Ovary (tissue), 10 donors: ENCODE measurements at regions of chr19 and their contacts with region 1.

Region 1: GRCh38 chr19:35269421-35270117 is 807 bp downstream of the USF2 start:
- DNase-seq: peak; percentile 90 to 95 (median 92)
- H3K4me3 ChIP-seq: peak overlapping the region; percentile 73
- H3K27ac ChIP-seq: peak overlapping the region; percentile 42 to 84
- H3K4me1 ChIP-seq: peaks cover 11% of the 10 kb centered on the region
- H3K27me3 ChIP-seq: no peaks in the 10 kb centered on the region
- CTCF ChIP-seq: peak; percentile 44 to 83 (median 79)
- EP300 ChIP-seq: no peak
- POLR2A ChIP-seq: no peak

Region 2: DNA sequence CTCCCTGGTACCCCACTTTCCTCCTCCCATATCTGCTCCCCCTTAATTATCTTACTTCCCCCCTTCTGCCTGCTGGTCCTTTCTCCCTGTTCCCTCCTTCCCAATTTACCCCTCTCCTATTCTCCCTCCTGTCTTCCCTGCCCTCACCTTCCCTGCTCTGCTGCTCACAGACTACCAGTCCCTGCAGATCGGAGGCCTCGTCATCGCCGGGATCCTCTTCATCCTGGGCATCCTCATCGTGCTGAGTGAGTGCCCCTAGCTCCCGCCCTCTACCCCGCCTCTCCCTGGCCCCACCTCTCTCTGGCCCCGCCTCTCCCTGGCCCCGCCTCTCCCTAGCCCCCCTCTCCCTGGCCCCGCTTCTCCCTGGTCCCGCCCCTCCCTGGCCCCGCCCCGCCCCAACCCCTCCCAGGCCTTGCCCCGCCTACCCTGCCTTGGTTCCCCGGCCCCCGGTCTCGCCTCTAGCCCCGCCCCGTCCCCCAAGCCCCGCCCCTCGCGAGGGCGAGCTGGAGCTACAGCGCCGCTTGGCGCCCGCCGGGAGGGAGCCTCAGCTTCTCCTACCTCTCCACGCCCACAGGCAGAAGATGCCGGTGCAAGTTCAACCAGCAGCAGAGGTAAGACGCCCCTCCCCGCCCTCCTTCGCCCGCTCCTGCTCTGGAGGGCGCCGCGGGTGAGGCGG is 128.5 kb before region 1 on chr19:
- intact Hi-C with region 1: loop called in 2 of 4 experiments (anchors 5 kb)
- DNase-seq: peak; percentile 85 to 97 (median 93)
- H3K4me3 ChIP-seq: peak overlapping the region; percentile 52
- H3K27ac ChIP-seq: peak overlapping the region; percentile 62 to 95
- H3K4me1 ChIP-seq: peaks cover 12% of the 10 kb centered on the region
- H3K27me3 ChIP-seq: no peaks in the 10 kb centered on the region
- CTCF ChIP-seq: peak in 2 of 3 donors; percentile 23 to 30
- EP300 ChIP-seq: no peak
- POLR2A ChIP-seq: peak; percentile 81

Region 3: DNA sequence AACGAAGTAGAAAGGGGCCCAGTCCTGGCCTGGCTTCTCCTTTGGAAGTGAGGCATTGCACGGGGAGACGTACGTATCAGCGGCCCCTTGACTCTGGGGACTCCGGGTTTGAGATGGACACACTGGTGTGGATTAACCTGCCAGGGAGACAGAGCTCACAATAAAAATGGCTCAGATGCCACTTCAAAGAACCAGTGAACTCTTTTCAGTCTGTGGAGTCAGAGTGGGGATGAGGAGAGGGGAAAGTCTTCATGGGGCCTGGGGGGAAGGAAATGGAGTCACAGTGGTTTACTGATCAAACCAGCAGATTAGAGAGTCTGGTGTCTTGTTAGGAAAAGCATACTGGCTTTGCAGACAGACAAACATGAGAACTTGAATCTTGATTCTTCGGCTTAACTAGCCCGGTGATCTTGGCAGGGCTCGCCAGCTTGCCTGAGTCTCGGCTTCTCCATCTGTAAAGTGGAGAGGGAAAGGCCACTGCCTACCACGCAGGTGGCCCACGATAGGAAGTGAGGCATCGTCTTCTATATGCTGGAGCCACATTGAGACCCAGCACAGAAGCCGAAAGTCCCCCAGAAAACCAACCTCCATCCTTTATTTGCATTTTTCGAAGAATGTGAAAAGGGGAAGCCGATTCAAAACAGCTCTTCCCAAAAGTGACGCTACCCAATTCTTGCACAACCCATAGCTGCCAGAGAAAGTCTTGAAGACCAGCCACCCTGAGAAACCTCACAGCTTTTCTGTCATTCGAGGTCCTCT is 77.8 kb after region 1 on chr19 and contains the start of gene FFAR1:
- intact Hi-C with region 1: loop called in 3 of 4 experiments (anchors 5 to 10 kb)
- DNase-seq: peak in 4 of 5 donors; percentile 12 to 30 (median 19)
- H3K4me3 ChIP-seq: no peak within 1 kb of the TSS
- H3K27ac ChIP-seq: peak within 1 kb of the TSS in 1 of 2 donors; percentile 72
- H3K4me1 ChIP-seq: peaks cover 3% of the 10 kb centered on the region
- H3K27me3 ChIP-seq: no peaks in the 10 kb centered on the region
- CTCF ChIP-seq: no peak
- EP300 ChIP-seq: no peak
- POLR2A ChIP-seq: no peak
- total RNA-seq, gene FFAR1: 0.11 to 5.0 (median 1.8) TPM

Region 4: GRCh38 chr19:35495107-35496064 is 225.8 kb after region 1 on chr19:
- intact Hi-C with region 1: loop called in 2 of 4 experiments (anchors 5 to 10 kb)
- DNase-seq: peak; percentile 58 to 76 (median 70)
- H3K4me3 ChIP-seq: no peak overlapping the region
- H3K27ac ChIP-seq: no peak overlapping the region
- H3K4me1 ChIP-seq: no peaks in the 10 kb centered on the region
- H3K27me3 ChIP-seq: no peaks in the 10 kb centered on the region
- CTCF ChIP-seq: peak; percentile 89 to 95 (median 91)
- EP300 ChIP-seq: no peak
- POLR2A ChIP-seq: no peak

Region 5: GRCh38 chr19:35612559-35613321 is 343.2 kb after region 1 on chr19 and contains the start of gene HAUS5:
- intact Hi-C with region 1: loop called in 1 of 4 experiments (anchors 10 kb)
- DNase-seq: peak; percentile 89 to 97 (median 95)
- H3K4me3 ChIP-seq: peak within 1 kb of the TSS; percentile 77
- H3K27ac ChIP-seq: peak within 1 kb of the TSS; percentile 23 to 85
- H3K4me1 ChIP-seq: peaks cover 5% of the 10 kb centered on the region
- H3K27me3 ChIP-seq: no peaks in the 10 kb centered on the region
- CTCF ChIP-seq: peak in 2 of 3 donors; percentile 46 to 55
- EP300 ChIP-seq: no peak
- POLR2A ChIP-seq: peak; percentile 63
- total RNA-seq, gene HAUS5: 10.6 to 24.5 (median 19.5) TPM